CD4-positive, alpha-beta T cell (primary cell): ENCODE measurements at regions of chr2 and their contacts with region 1.

Region 1: GRCh38 chr2:195656859-195657633 is at the start of gene SLC39A10:
- DNase-seq: peak; percentile 93 to 100 (median 98)
- ATAC-seq: peak; percentile 78
- H3K4me3 ChIP-seq: peak within 1 kb of the TSS; percentile 94
- H3K4me3 Mint-ChIP-seq: peak within 1 kb of the TSS; percentile 99
- H3K27ac ChIP-seq: peak within 1 kb of the TSS; percentile 97 to 99
- H3K27ac Mint-ChIP-seq: peak within 1 kb of the TSS; percentile 98
- H3K4me1 ChIP-seq: peaks cover 10% of the 10 kb centered on the region
- H3K4me1 Mint-ChIP-seq: peaks cover 35% of the 10 kb centered on the region
- H3K27me3 ChIP-seq: no peaks in the 10 kb centered on the region
- H3K27me3 Mint-ChIP-seq: peaks cover 4% of the 10 kb centered on the region
- CTCF ChIP-seq: no peak
- total RNA-seq, gene SLC39A10: 38.2 to 39.4 TPM

Region 2: GRCh38 chr2:195318440-195319111 is 338.5 kb before region 1 on chr2:
- CTCF ChIA-PET with region 1: interaction called, 4 read pairs
- POLR2A ChIA-PET with region 1: interaction called, 4 read pairs
- intact Hi-C with region 1: loop called (anchors 2 to 5 kb)
- DNase-seq: peak in 13 of 14 experiments; percentile 11 to 70 (median 33)
- ATAC-seq: no peak
- H3K4me3 ChIP-seq: no peak overlapping the region
- H3K4me3 Mint-ChIP-seq: no peak overlapping the region
- H3K27ac ChIP-seq: no peak overlapping the region
- H3K27ac Mint-ChIP-seq: no peak overlapping the region
- H3K4me1 ChIP-seq: no peaks in the 10 kb centered on the region
- H3K4me1 Mint-ChIP-seq: peaks cover 7% of the 10 kb centered on the region
- H3K27me3 ChIP-seq: no peaks in the 10 kb centered on the region
- H3K27me3 Mint-ChIP-seq: no peaks in the 10 kb centered on the region
- CTCF ChIP-seq: peak; percentile 72

Region 3: GRCh38 chr2:195513119-195513518 is 143.9 kb before region 1 on chr2:
- CTCF ChIA-PET with region 1: no interaction called
- POLR2A ChIA-PET with region 1: interaction called, 11 read pairs
- intact Hi-C with region 1: no loop called
- DNase-seq: no peak
- ATAC-seq: no peak
- H3K4me3 ChIP-seq: no peak overlapping the region
- H3K4me3 Mint-ChIP-seq: no peak overlapping the region
- H3K27ac ChIP-seq: no peak overlapping the region
- H3K27ac Mint-ChIP-seq: no peak overlapping the region
- H3K4me1 ChIP-seq: no peaks in the 10 kb centered on the region
- H3K4me1 Mint-ChIP-seq: peaks cover 12% of the 10 kb centered on the region
- H3K27me3 ChIP-seq: no peaks in the 10 kb centered on the region
- H3K27me3 Mint-ChIP-seq: no peaks in the 10 kb centered on the region
- CTCF ChIP-seq: no peak

Region 4: GRCh38 chr2:195570329-195570728 is 86.7 kb before region 1 on chr2:
- CTCF ChIA-PET with region 1: interaction called, 10 read pairs
- POLR2A ChIA-PET with region 1: interaction called, 45 read pairs
- intact Hi-C with region 1: loop called in 1 of 2 experiments (anchors 5 kb)
- DNase-seq: no peak
- ATAC-seq: no peak
- H3K4me3 ChIP-seq: no peak overlapping the region
- H3K4me3 Mint-ChIP-seq: no peak overlapping the region
- H3K27ac ChIP-seq: no peak overlapping the region
- H3K27ac Mint-ChIP-seq: peak overlapping the region; percentile 78
- H3K4me1 ChIP-seq: peaks cover 5% of the 10 kb centered on the region
- H3K4me1 Mint-ChIP-seq: peaks cover 50% of the 10 kb centered on the region
- H3K27me3 ChIP-seq: no peaks in the 10 kb centered on the region
- H3K27me3 Mint-ChIP-seq: no peaks in the 10 kb centered on the region
- CTCF ChIP-seq: no peak

Region 5: DNA sequence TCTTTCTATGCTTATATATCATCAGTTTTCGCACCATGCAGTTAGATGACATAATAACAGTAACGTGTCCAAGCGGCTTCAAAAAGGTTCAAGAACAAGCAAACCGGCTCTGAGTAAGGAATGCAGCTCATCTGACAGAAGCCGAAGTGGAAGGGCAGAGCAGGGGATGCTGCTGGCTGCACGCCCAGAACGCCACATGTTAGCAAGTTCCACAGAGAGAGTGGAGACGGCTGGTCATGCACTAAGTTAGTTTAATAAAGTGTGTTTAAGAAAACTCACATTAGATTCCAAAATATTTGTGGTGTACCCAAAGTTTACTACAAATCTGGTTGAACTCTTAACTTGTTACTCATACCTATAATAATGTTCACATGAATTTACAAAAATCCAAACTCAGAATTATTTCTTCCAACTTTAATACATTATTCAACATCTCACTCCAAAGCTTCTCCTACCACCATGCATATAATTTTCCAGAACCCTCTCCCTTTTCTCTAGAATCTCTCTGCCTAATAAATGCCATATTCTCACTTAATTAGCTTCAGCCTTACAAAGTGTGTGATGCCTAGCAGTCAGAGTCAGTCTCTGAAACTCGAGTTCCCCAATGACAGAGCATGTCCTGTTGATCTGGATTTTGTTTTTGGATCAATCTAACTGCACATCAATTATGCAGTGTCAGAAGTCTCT is 241.6 kb after region 1 on chr2:
- CTCF ChIA-PET with region 1: no interaction called
- POLR2A ChIA-PET with region 1: no interaction called
- intact Hi-C with region 1: no loop called
- DNase-seq: no peak
- ATAC-seq: no peak
- H3K4me3 ChIP-seq: no peak overlapping the region
- H3K4me3 Mint-ChIP-seq: no peak overlapping the region
- H3K27ac ChIP-seq: no peak overlapping the region
- H3K27ac Mint-ChIP-seq: no peak overlapping the region
- H3K4me1 ChIP-seq: no peaks in the 10 kb centered on the region
- H3K4me1 Mint-ChIP-seq: no peaks in the 10 kb centered on the region
- H3K27me3 ChIP-seq: no peaks in the 10 kb centered on the region
- H3K27me3 Mint-ChIP-seq: peaks cover 4% of the 10 kb centered on the region
- CTCF ChIP-seq: no peak

Region 6: DNA sequence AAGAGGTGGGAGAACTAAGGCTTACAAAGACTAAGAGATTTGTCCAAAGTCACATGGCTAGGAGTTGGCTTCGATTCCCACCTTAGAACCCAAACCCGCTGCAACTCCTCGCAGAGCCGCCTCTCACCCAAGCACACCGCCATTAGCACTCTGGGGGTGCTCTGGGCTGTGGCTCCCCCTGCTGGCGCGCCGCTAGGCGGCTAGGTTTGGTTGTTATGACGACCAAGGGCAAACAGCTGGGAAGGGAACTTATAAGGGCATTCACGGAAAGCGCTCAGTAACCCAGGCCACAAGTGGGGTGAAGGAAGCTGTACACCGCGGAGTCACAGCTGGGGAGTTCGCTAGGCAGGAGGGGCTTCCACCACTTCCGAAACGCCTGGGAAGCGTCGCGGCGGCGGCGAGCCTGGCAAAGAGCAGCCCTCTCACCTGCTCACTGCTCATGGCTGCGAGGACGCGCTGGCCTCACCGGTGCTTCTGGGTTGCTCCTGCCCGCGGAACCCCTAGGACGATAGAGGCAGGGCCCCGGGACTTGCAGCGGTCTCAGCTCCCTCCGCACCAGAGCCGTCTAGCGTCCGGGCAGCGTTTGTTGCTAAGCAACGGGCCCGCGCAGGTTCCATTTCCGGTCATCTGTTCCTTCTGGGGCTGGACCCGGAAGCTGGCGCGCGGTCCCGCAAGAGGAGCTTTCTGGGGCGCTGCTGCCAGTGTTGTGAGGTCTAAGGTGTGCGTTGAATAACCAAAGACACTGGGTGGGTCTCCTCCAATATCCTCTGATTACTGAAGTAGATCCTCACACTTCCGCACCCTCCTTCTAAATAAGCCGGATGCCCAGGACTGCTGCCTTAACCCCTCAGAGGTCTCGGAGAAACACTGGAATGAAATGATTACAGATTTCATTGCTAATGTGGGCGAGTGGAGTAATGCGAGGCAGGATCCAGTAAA is 411.5 kb after region 1 on chr2 and contains the start of gene DNAH7:
- CTCF ChIA-PET with region 1: interaction called, 12 read pairs
- POLR2A ChIA-PET with region 1: interaction called, 12 read pairs
- intact Hi-C with region 1: no loop called
- DNase-seq: peak; percentile 81 to 97 (median 91)
- ATAC-seq: peak; percentile 96
- H3K4me3 ChIP-seq: peak within 1 kb of the TSS; percentile 69
- H3K4me3 Mint-ChIP-seq: peak within 1 kb of the TSS; percentile 86
- H3K27ac ChIP-seq: peak within 1 kb of the TSS in 1 of 2 donors; percentile 40
- H3K27ac Mint-ChIP-seq: peak within 1 kb of the TSS; percentile 47
- H3K4me1 ChIP-seq: peaks cover 13% of the 10 kb centered on the region
- H3K4me1 Mint-ChIP-seq: peaks cover 19% of the 10 kb centered on the region
- H3K27me3 ChIP-seq: no peaks in the 10 kb centered on the region
- H3K27me3 Mint-ChIP-seq: peaks cover under 1% of the 10 kb centered on the region
- CTCF ChIP-seq: peak; percentile 94
- total RNA-seq, gene DNAH7: not detected

Region 7: GRCh38 chr2:196639180-196640030 is 982.4 kb after region 1 on chr2 and contains the start of gene CCDC150:
- CTCF ChIA-PET with region 1: no interaction called
- POLR2A ChIA-PET with region 1: no interaction called
- intact Hi-C with region 1: loop called in 1 of 2 experiments (anchors 5 kb)
- DNase-seq: peak; percentile 88 to 96 (median 92)
- ATAC-seq: peak; percentile 100
- H3K4me3 ChIP-seq: peak within 1 kb of the TSS; percentile 68
- H3K4me3 Mint-ChIP-seq: peak within 1 kb of the TSS; percentile 91
- H3K27ac ChIP-seq: no peak within 1 kb of the TSS
- H3K27ac Mint-ChIP-seq: peak within 1 kb of the TSS; percentile 40
- H3K4me1 ChIP-seq: peaks cover 12% of the 10 kb centered on the region
- H3K4me1 Mint-ChIP-seq: peaks cover 17% of the 10 kb centered on the region
- H3K27me3 ChIP-seq: no peaks in the 10 kb centered on the region
- H3K27me3 Mint-ChIP-seq: no peaks in the 10 kb centered on the region
- CTCF ChIP-seq: no peak
- total RNA-seq, gene CCDC150: 0.22 to 0.75 TPM